Naive thymus-derived CD4-positive, alpha-beta T cell (primary cell): ENCODE measurements at regions of chr6 and their contacts with region 1.

Region 1: DNA sequence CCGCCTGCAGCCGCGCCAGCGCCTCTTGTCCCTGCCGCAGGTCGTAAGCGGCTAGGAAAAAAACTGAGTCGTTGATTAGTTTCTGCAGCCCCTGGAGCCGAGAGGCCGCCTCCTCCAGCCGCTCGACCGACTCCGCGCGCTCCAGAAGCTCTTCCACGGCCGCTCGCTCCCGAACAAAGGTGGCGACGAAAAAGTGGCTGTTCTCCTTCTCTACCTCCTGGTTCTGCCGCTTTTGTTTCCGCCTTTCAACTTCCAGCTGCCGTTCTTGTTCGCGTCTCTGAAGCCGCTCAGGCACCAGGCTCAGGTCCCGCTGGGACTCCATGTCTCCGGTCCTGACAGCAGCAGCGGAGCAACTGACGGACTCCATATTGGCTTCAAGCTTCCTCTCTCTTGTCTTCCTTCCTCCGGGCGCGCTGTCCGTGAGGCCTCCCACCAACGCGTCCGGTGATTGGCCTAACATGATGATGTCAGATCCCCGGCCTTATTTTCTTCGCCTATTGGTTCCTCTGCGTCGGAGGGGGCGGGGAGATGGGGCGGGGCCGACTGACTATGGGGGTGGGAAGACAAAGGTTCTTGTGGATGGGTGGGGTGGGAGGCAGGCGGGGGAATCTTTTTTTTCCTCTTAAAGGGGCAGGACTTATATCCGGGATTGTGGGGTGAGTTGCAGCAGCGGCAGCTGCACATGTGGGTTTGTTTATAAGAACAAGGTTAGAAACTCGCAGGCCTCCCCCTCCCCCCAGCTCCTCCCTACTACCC is at the start of gene TBCC:
- DNase-seq: peak; percentile 73 to 97 (median 93)
- ATAC-seq: peak; percentile 88
- H3K4me3 ChIP-seq: peak within 1 kb of the TSS; percentile 95
- H3K4me3 Mint-ChIP-seq: peak within 1 kb of the TSS; percentile 91 to 100 (median 99)
- H3K27ac ChIP-seq: peak within 1 kb of the TSS; percentile 88
- H3K27ac Mint-ChIP-seq: peak within 1 kb of the TSS; percentile 97 to 100 (median 100)
- H3K4me1 ChIP-seq: peaks cover 19 to 29% of the 10 kb centered on the region in 2 donors
- H3K4me1 Mint-ChIP-seq: peaks cover 12 to 39% (median 27%) of the 10 kb centered on the region in 7 donors
- H3K27me3 ChIP-seq: no peaks in the 10 kb centered on the region
- H3K27me3 Mint-ChIP-seq: no peaks in the 10 kb centered on the region
- total RNA-seq, gene TBCC: 39.6 to 74.8 (median 71.4) TPM

Region 2: DNA sequence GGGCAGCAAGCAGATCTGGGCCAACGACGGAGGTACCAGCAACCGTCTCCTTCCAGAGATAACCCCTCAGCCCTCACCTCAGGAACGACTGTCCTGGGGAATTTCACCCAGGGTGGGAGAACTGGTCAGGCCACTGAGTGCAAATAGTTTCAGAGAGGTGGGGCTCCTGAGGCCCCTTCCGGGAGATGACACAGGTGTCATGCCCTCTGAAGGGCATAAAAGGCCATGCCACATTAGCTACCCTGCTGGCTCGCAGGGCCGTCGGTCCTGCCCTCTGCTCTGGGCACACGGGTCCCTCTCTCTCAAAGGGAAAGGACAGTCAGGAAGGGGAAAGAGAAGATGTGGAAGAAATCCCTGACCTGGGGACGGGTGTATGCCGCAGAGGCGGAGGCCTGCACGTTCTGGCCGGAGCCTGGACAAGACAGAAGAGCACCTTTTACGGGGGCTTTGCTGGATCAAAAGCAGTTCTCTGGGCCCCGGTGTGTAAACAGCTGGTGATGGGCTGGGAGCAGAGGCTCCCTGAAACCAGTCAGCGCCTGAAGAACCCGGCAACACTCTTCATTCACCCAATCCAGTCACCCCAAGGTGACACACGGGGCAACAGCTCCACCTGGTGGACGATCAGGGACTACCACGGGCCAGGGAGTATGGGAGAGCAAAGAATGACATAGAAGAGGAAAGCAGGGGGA is 702.0 kb before region 1 on chr6:
- CTCF ChIA-PET with region 1: no interaction called
- POLR2A ChIA-PET with region 1: interaction called, 3 read pairs
- intact Hi-C with region 1: loop called in 1 of 2 experiments (anchors 5 kb)
- DNase-seq: peak; percentile 85 to 95 (median 91)
- ATAC-seq: peak; percentile 67
- H3K4me3 ChIP-seq: peak overlapping the region; percentile 59
- H3K4me3 Mint-ChIP-seq: peak overlapping the region; percentile 84 to 99 (median 95)
- H3K27ac ChIP-seq: peak overlapping the region; percentile 76
- H3K27ac Mint-ChIP-seq: peak overlapping the region; percentile 73 to 98 (median 94)
- H3K4me1 ChIP-seq: peaks cover 55 to 64% of the 10 kb centered on the region in 2 donors
- H3K4me1 Mint-ChIP-seq: peaks cover 53 to 89% (median 64%) of the 10 kb centered on the region in 7 donors
- H3K27me3 ChIP-seq: no peaks in the 10 kb centered on the region
- H3K27me3 Mint-ChIP-seq: no peaks in the 10 kb centered on the region

Region 3: GRCh38 chr6:42440778-42441696 is 304.8 kb before region 1 on chr6:
- CTCF ChIA-PET with region 1: no interaction called
- POLR2A ChIA-PET with region 1: no interaction called
- intact Hi-C with region 1: no loop called
- DNase-seq: no peak
- ATAC-seq: no peak
- H3K4me3 ChIP-seq: no peak overlapping the region
- H3K4me3 Mint-ChIP-seq: peak overlapping the region in 7 of 10 donors; percentile 2 to 61 (median 54)
- H3K27ac ChIP-seq: no peak overlapping the region
- H3K27ac Mint-ChIP-seq: peak overlapping the region in 8 of 9 donors; percentile 16 to 86 (median 65)
- H3K4me1 ChIP-seq: peaks cover 32 to 35% of the 10 kb centered on the region in 2 donors
- H3K4me1 Mint-ChIP-seq: peaks cover 24 to 81% (median 68%) of the 10 kb centered on the region in 7 donors
- H3K27me3 ChIP-seq: no peaks in the 10 kb centered on the region
- H3K27me3 Mint-ChIP-seq: no peaks in the 10 kb centered on the region

Region 4: GRCh38 chr6:42756722-42757121 is 10.8 kb after region 1 on chr6:
- CTCF ChIA-PET with region 1: no interaction called
- POLR2A ChIA-PET with region 1: interaction called, 62 read pairs
- intact Hi-C with region 1: no loop called
- DNase-seq: no peak
- ATAC-seq: no peak
- H3K4me3 ChIP-seq: no peak overlapping the region
- H3K4me3 Mint-ChIP-seq: no peak overlapping the region
- H3K27ac ChIP-seq: no peak overlapping the region
- H3K27ac Mint-ChIP-seq: peak overlapping the region in 1 of 9 donors; percentile 78
- H3K4me1 ChIP-seq: no peaks in the 10 kb centered on the region
- H3K4me1 Mint-ChIP-seq: peaks cover 18 to 56% (median 38%) of the 10 kb centered on the region in 7 donors
- H3K27me3 ChIP-seq: no peaks in the 10 kb centered on the region
- H3K27me3 Mint-ChIP-seq: no peaks in the 10 kb centered on the region

Region 5: GRCh38 chr6:42808492-42809483 is 62.9 kb after region 1 on chr6:
- CTCF ChIA-PET with region 1: no interaction called
- POLR2A ChIA-PET with region 1: interaction called, 18 read pairs
- intact Hi-C with region 1: no loop called
- DNase-seq: no peak
- ATAC-seq: no peak
- H3K4me3 ChIP-seq: no peak overlapping the region
- H3K4me3 Mint-ChIP-seq: no peak overlapping the region
- H3K27ac ChIP-seq: no peak overlapping the region
- H3K27ac Mint-ChIP-seq: peak overlapping the region in 3 of 9 donors; percentile 8 to 47 (median 42)
- H3K4me1 ChIP-seq: no peaks in the 10 kb centered on the region
- H3K4me1 Mint-ChIP-seq: peaks cover 4 to 26% (median 15%) of the 10 kb centered on the region in 7 donors
- H3K27me3 ChIP-seq: no peaks in the 10 kb centered on the region
- H3K27me3 Mint-ChIP-seq: no peaks in the 10 kb centered on the region

Region 6: DNA sequence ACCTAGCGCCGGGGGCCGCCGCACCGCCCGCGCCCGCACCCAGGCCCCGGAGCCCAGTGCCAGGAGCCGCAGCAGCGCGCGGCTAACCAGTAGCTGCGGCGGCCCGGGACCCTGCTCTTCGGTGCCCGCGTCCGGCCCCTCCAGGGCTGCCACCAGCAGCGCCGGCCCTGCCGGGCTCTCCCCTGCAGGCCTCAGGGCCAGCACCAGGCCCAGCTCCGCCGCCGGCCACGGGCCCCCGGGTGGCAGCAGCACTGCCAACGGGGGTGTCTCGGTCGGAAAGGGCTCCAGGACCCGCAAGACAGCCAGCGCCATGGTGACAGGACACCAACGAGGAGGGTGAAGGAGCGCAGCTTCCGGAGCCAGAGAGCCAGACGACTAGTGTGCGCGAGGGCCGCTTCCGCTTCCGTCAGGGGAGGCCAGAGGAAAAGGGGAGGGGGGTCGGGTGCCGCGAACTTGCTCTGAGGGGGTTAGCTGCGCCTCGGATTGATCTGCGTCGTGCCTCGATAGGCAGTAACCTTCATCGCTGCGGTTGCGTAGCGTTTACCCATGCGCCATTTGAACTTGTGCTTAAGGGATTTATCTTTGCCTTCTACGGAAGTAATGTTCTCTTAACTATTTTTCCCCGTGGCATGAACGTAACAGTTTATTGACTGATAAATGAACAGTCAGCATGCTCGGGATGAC is 233.1 kb after region 1 on chr6 and contains the start of gene PEX6:
- CTCF ChIA-PET with region 1: no interaction called
- POLR2A ChIA-PET with region 1: interaction called, 8 read pairs
- intact Hi-C with region 1: loop called (anchors 1 to 2 kb)
- DNase-seq: peak; percentile 77 to 98 (median 93)
- ATAC-seq: peak; percentile 97
- H3K4me3 ChIP-seq: peak within 1 kb of the TSS; percentile 90
- H3K4me3 Mint-ChIP-seq: peak within 1 kb of the TSS; percentile 91 to 99 (median 94)
- H3K27ac ChIP-seq: peak within 1 kb of the TSS; percentile 85
- H3K27ac Mint-ChIP-seq: peak within 1 kb of the TSS; percentile 92 to 99 (median 98)
- H3K4me1 ChIP-seq: peaks cover 30 to 32% of the 10 kb centered on the region in 2 donors
- H3K4me1 Mint-ChIP-seq: peaks cover 19 to 61% (median 47%) of the 10 kb centered on the region in 7 donors
- H3K27me3 ChIP-seq: no peaks in the 10 kb centered on the region
- H3K27me3 Mint-ChIP-seq: no peaks in the 10 kb centered on the region
- total RNA-seq, gene PEX6: 14.1 to 42.3 (median 28.0) TPM

Region 7: DNA sequence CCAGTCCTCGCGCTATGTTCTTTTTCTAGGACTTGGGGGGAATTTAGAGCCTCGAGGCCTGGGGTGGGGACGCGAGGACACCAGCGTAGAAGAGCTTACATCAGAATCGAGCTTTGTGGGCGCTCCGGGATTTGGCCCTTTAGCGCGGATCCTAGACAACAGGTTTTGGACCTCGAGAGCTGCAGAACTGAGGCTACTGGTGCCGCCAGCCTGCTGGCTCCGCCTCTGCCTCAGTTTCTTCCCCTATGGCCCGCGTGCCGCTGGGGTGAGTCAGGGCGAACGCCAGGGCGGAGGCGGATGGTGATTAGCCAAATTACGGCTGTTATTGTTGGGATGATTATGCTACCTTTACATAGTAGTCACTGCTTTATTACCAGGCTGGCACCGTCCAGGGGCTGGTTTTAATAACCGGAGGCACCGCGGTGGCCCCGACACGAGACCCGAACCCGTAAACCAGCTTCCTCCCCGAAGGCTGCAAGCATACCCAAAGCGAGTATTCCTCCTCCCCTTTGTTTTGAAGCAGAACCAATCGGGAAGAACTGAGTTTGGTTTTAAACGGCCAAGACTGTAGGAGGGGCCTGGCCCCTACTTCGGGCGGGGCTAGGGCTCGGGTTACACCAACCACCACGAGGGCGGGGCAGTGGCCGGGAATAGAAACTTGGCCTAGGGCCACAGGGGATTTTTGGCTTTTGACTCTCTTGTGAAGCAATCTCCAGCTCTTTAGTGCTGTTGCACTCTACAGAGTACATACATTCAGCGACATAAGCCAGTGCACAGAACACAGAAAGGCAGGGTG is 883.8 kb after region 1 on chr6:
- CTCF ChIA-PET with region 1: no interaction called
- POLR2A ChIA-PET with region 1: no interaction called
- intact Hi-C with region 1: loop called in 1 of 2 experiments (anchors 1 kb)
- DNase-seq: peak; percentile 64 to 90 (median 75)
- ATAC-seq: peak; percentile 79
- H3K4me3 ChIP-seq: peak overlapping the region; percentile 98
- H3K4me3 Mint-ChIP-seq: peak overlapping the region; percentile 97 to 100 (median 99)
- H3K27ac ChIP-seq: peak overlapping the region; percentile 76
- H3K27ac Mint-ChIP-seq: peak overlapping the region; percentile 90 to 99 (median 98)
- H3K4me1 ChIP-seq: peaks cover 9 to 11% of the 10 kb centered on the region in 2 donors
- H3K4me1 Mint-ChIP-seq: peaks cover 30 to 42% (median 38%) of the 10 kb centered on the region in 7 donors
- H3K27me3 ChIP-seq: no peaks in the 10 kb centered on the region
- H3K27me3 Mint-ChIP-seq: no peaks in the 10 kb centered on the region